Activated naive CD4-positive, alpha-beta T cell treated with anti-CD3 and anti-CD28 coated beads, Interleukin-2, amount 10 ng/mL, durations not matched to agents 7 days and 5 days (primary cell): ENCODE measurements at regions of chr19 and their contacts with region 1.

Region 1: DNA sequence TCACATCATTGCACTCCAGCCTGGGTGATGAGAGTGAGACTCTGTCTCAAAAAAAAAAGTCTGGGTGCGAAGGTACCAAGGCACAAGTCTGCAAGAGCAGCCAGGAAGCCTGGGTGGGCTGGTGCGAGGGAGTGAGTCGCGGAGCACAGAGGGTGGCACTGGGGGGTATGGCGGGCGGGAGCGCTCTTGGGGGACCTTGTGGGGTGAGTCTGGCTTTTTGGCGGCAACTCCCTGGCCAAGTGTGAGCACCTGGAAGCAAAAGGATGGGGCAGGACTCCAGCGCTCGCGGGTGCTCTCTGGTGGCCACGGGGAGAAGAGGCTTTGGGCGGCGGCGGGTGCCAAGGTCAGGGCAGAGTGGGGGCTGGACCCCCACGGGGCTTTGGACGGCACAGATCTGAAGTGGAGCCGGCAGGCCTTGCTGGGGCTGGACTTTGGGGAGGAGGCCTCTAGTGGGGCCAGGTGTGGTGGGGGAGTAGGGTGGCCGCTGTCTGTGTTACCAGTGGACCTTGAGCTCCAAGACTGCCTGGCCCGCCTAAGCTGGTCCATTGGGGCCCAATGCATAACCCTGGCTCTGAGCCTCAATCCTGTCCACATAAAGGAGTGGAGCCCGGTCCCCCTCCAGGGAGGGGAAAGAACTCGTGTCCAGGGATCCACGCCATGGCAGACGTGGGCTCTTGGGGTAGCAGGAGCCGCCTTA is 1.6 kb downstream of the P2RY11 start:
- DNase-seq: peak; percentile 73
- H3K4me3 Mint-ChIP-seq: no peak overlapping the region
- H3K27ac Mint-ChIP-seq: peak overlapping the region; percentile 82
- H3K4me1 Mint-ChIP-seq: peaks cover 54% of the 10 kb centered on the region
- H3K27me3 Mint-ChIP-seq: no peaks in the 10 kb centered on the region

Region 2: DNA sequence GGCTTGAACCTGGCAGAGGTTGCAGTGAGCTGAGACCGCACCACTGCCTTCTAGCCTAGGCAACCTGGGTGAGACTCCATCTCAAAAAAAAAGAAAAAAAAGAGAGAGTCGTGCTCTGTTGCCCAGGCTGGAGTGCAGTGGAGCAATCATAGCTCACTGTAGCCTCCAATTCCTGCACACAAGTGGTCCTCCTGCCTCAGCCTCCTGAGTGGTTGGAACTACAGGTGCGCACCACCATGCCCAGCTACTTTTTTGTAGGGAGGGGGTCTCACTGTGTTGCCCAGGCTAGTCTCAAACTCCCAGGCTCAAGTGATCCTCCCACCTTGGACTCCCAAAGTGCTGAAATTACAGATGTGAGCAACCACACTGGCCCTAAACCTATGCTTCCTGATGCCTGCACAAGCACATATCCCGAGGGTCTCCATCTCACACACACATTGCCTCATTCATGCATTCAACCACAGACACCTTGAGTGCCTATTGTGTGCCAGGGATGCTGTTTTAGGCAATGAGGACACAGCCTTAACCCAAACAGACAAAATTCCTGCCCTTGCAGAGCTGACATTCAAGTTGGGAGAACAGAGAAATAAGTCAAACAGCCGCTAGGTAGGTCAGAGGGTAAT is 12.8 kb before region 1 on chr19:
- CTCF ChIA-PET with region 1: interaction called, 51 read pairs
- DNase-seq: no peak
- H3K4me3 Mint-ChIP-seq: no peak overlapping the region
- H3K27ac Mint-ChIP-seq: no peak overlapping the region
- H3K4me1 Mint-ChIP-seq: peaks cover 55% of the 10 kb centered on the region
- H3K27me3 Mint-ChIP-seq: peaks cover 5% of the 10 kb centered on the region